ENCODE measurements at regions of chr5 and their contacts with region 1.

Region 1: GRCh38 chr5:1344975-1345838 is at the start of gene CLPTM1L:
- DNase-seq: peak; percentile 82 to 93 (median 90)
- ATAC-seq: peak; percentile 95
- H3K4me3 ChIP-seq: peak within 1 kb of the TSS; percentile 79
- H3K4me3 Mint-ChIP-seq: peak within 1 kb of the TSS; percentile 84 to 95 (median 91)
- H3K27ac ChIP-seq: peak within 1 kb of the TSS; percentile 97
- H3K27ac Mint-ChIP-seq: peak within 1 kb of the TSS; percentile 72 to 95 (median 88)
- H3K4me1 ChIP-seq: peaks cover 12 to 18% of the 10 kb centered on the region in 2 donors
- H3K4me1 Mint-ChIP-seq: peaks cover 21 to 44% (median 33%) of the 10 kb centered on the region in 7 donors
- H3K27me3 ChIP-seq: no peaks in the 10 kb centered on the region
- H3K27me3 Mint-ChIP-seq: no peaks in the 10 kb centered on the region
- total RNA-seq, gene CLPTM1L: 64.9 to 104 (median 71.9) TPM

Region 2: DNA sequence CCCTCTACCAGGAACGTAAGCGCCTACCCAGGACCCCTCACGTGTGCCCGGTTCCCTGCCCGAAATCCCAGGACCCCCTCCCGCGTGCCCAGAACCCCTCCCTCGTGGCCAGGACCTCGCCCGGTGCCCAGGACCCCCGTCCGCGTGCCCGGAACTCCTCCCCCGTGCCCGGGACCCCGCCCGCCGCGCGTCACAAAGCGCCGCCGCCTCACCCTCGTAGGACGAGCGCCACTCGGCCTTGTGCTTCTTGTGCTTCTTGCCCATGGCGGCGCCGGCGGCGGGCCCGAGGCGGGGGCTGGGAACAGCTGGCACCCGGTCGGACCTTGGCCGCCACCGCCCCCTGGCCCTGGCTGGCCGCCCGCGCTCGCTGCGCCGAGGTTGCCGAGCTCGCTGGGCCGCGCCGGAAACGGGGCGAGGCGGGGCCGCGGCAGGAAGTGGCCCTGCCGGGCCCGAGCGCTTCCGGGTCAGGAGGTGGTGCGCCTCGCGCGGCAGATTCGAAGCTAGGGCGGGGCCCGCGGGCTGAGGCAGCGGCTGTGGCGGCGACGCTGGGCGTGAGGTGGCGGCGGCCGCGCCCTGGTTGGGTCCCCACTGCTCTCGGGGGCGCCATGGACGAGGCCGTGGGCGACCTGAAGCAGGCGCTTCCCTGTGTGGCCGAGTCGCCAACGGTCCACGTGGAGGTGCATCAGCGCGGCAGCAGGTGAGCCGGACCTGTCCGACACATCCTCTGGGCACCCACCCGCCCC is 452.6 kb before region 1 on chr5 and contains the starts of genes BRD9 and TRIP13:
- CTCF ChIA-PET with region 1: no interaction called
- POLR2A ChIA-PET with region 1: no interaction called
- intact Hi-C with region 1: loop called in 1 of 2 experiments (anchors 2 kb)
- DNase-seq: peak; percentile 77 to 90 (median 86)
- ATAC-seq: peak; percentile 98
- H3K4me3 ChIP-seq: peak within 1 kb of the TSS; percentile 84
- H3K4me3 Mint-ChIP-seq: peak within 1 kb of the TSS; percentile 79 to 93 (median 86)
- H3K27ac ChIP-seq: peak within 1 kb of the TSS; percentile 91
- H3K27ac Mint-ChIP-seq: peak within 1 kb of the TSS; percentile 69 to 92 (median 89)
- H3K4me1 ChIP-seq: peaks cover 10 to 14% of the 10 kb centered on the region in 2 donors
- H3K4me1 Mint-ChIP-seq: peaks cover 12 to 35% (median 28%) of the 10 kb centered on the region in 7 donors
- H3K27me3 ChIP-seq: no peaks in the 10 kb centered on the region
- H3K27me3 Mint-ChIP-seq: no peaks in the 10 kb centered on the region
- total RNA-seq, gene BRD9: 63.2 to 93.2 (median 82.2) TPM
- total RNA-seq, gene TRIP13: 0.39 to 23.5 (median 0.57) TPM in 4 of 5 experiments, not detected in the other

Region 3: GRCh38 chr5:1167728-1168709 is 177.2 kb before region 1 on chr5:
- CTCF ChIA-PET with region 1: interaction called, 4 read pairs
- POLR2A ChIA-PET with region 1: no interaction called
- intact Hi-C with region 1: loop called in 1 of 2 experiments (anchors 1 kb)
- DNase-seq: peak; percentile 51 to 79 (median 71)
- ATAC-seq: peak; percentile 81
- H3K4me3 ChIP-seq: no peak overlapping the region
- H3K4me3 Mint-ChIP-seq: peak overlapping the region; percentile 58 to 85 (median 79)
- H3K27ac ChIP-seq: no peak overlapping the region
- H3K27ac Mint-ChIP-seq: no peak overlapping the region
- H3K4me1 ChIP-seq: no peaks in the 10 kb centered on the region
- H3K4me1 Mint-ChIP-seq: peaks cover 6 to 18% (median 12%) of the 10 kb centered on the region in 7 donors
- H3K27me3 ChIP-seq: no peaks in the 10 kb centered on the region
- H3K27me3 Mint-ChIP-seq: peaks cover 2 to 22% (median 11%) of the 10 kb centered on the region in 5 donors

Region 4: DNA sequence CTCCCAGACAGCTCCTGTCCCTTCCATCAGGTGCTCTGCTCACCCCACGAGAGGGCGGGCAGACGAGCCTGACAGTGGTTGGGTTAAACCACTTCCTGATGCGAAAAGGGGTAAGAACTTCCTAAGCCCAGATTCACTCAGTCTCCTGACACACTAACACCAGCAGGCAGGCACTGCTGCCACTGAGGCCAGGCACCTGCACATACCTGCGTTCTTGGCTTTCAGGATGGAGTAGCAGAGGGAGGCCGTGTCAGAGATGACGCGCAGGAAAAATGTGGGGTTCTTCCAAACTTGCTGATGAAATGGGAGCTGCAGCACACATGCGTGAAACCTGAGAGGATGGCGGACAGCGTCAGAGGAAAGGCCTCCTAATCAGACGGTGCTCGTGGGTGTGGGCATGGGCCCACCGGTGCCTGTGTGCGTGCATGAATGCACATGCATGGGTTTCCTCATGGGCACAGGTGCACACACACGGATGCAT is 90.1 kb before region 1 on chr5:
- CTCF ChIA-PET with region 1: no interaction called
- POLR2A ChIA-PET with region 1: interaction called, 7 read pairs
- intact Hi-C with region 1: loop called in 1 of 2 experiments (anchors 1 kb)
- DNase-seq: peak; percentile 31 to 79 (median 71)
- ATAC-seq: peak; percentile 83
- H3K4me3 ChIP-seq: peak overlapping the region; percentile 48
- H3K4me3 Mint-ChIP-seq: peak overlapping the region; percentile 76 to 97 (median 90)
- H3K27ac ChIP-seq: peak overlapping the region; percentile 57
- H3K27ac Mint-ChIP-seq: peak overlapping the region; percentile 30 to 93 (median 89)
- H3K4me1 ChIP-seq: peaks cover 9 to 18% of the 10 kb centered on the region in 2 donors
- H3K4me1 Mint-ChIP-seq: peaks cover 7 to 23% (median 20%) of the 10 kb centered on the region in 7 donors
- H3K27me3 ChIP-seq: no peaks in the 10 kb centered on the region
- H3K27me3 Mint-ChIP-seq: no peaks in the 10 kb centered on the region

Region 5: DNA sequence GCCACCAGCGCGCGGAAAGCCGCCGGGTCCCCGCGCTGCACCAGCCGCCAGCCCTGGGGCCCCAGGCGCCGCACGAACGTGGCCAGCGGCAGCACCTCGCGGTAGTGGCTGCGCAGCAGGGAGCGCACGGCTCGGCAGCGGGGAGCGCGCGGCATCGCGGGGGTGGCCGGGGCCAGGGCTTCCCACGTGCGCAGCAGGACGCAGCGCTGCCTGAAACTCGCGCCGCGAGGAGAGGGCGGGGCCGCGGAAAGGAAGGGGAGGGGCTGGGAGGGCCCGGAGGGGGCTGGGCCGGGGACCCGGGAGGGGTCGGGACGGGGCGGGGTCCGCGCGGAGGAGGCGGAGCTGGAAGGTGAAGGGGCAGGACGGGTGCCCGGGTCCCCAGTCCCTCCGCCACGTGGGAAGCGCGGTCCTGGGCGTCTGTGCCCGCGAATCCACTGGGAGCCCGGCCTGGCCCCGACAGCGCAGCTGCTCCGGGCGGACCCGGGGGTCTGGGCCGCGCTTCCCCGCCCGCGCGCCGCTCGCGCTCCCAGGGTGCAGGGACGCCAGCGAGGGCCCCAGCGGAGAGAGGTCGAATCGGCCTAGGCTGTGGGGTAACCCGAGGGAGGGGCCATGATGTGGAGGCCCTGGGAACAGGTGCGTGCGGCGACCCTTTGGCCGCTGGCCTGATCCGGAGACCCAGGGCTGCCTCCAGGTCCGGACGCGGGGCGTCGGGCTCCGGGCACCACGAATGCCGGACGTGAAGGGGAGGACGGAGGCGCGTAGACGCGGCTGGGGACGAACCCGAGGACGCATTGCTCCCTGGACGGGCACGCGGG is 50.2 kb before region 1 on chr5 and contains the start of gene TERT:
- CTCF ChIA-PET with region 1: no interaction called
- POLR2A ChIA-PET with region 1: interaction called, 4 read pairs
- intact Hi-C with region 1: loop called (anchors 1 to 2 kb)
- DNase-seq: peak; percentile 50 to 81 (median 74)
- ATAC-seq: peak; percentile 91
- H3K4me3 ChIP-seq: no peak within 1 kb of the TSS
- H3K4me3 Mint-ChIP-seq: peak within 1 kb of the TSS in 9 of 10 donors; percentile 45 to 66 (median 59)
- H3K27ac ChIP-seq: no peak within 1 kb of the TSS
- H3K27ac Mint-ChIP-seq: no peak within 1 kb of the TSS
- H3K4me1 ChIP-seq: peaks cover 0 to 11% of the 10 kb centered on the region in 2 donors
- H3K4me1 Mint-ChIP-seq: peaks cover 0 to 15% (median 4%) of the 10 kb centered on the region in 7 donors
- H3K27me3 ChIP-seq: no peaks in the 10 kb centered on the region
- H3K27me3 Mint-ChIP-seq: peaks cover 0 to 6% (median 0%) of the 10 kb centered on the region in 5 donors
- total RNA-seq, gene TERT: 0.13 to 3.3 (median 1.8) TPM

Region 6: DNA sequence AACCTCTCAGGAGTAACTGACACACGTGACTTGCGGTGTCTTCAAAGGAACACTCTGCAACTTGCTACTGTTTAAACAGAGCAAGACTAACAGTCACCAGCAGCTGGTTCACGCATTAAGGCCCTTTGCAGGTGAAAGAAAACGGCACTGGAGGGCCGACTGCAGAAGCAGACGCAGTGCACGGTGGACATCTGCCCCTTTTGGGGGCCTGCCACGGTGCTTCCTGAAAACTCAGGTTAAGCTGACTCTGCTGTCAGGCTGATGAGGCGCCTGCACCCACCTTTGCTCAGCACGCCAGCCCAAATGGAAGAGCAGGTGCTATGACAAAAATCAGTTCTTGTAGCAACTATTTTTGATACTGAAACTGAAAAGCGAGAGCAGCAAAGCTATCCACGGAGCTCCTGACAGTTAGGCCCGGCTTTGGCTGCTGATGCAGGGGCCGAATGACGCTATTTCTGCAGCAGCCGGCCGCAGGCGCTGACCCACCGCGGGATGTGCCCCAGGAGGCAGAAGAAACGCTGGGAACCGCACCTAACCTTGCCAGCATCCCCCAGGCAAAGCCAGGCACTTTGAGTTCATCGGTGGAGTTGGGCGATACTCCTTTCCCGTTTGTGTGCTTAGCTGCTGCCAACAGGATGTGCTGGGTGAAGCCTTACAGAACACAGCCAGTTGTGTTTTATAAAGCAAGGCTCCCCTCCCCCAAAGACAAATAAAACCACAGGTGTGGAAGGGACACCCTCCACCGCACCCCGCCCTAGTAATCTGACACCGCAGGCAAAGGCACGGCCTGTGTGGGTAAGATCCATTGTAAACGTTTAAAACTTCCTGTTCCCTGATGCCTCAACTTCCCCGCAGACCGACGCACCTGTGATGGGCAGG is 29.3 kb before region 1 on chr5:
- CTCF ChIA-PET with region 1: interaction called, 3 read pairs
- POLR2A ChIA-PET with region 1: interaction called, 14 read pairs
- intact Hi-C with region 1: loop called (anchors 1 kb)
- DNase-seq: peak in 8 of 9 donors; percentile 47 to 88 (median 82)
- ATAC-seq: peak; percentile 79
- H3K4me3 ChIP-seq: peak overlapping the region; percentile 51
- H3K4me3 Mint-ChIP-seq: peak overlapping the region; percentile 81 to 92 (median 86)
- H3K27ac ChIP-seq: peak overlapping the region; percentile 66
- H3K27ac Mint-ChIP-seq: peak overlapping the region; percentile 94 to 96 (median 95)
- H3K4me1 ChIP-seq: peaks cover 39 to 55% of the 10 kb centered on the region in 2 donors
- H3K4me1 Mint-ChIP-seq: peaks cover 36 to 70% (median 59%) of the 10 kb centered on the region in 7 donors
- H3K27me3 ChIP-seq: no peaks in the 10 kb centered on the region
- H3K27me3 Mint-ChIP-seq: peaks cover 0 to 2% (median 0%) of the 10 kb centered on the region in 5 donors

Region 7: DNA sequence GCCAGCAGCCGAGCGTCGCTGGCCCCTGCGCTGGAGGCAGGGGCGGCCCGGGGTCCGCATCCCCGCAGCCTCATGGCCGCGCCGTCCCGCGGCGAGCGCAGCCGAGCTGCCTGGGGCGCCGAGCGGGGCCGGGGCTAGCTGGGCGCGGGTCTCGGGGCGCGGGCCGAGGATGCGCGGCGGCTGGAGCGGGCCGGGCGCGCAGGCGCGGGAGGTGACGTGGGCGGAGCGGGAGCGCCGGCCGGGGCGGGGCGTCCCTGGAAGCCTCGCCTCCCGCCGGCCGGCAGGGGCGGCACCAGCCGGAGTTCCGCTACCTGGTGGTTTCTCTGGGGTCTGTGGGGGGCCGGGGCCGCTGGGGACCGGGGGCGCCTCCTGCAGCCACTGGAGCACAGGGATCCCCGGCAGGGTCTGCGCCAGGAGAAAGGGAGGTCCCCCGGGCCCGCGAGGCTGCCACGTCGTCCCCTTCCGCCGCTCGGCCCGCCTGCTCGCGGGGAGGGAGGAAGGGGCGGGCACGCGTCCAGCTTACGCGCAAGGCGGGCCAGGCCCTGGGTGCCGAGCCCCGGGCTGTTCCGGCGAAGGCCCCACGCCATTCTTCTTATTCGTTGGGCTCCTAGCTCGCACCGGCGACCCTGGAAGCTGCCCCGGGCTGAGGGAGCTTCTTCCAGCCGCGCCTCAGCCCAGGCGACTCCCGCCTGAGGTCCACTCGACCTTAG is 178.7 kb after region 1 on chr5 and contains the start of gene LPCAT1:
- CTCF ChIA-PET with region 1: no interaction called
- POLR2A ChIA-PET with region 1: no interaction called
- intact Hi-C with region 1: loop called in 1 of 2 experiments (anchors 10 kb)
- DNase-seq: peak; percentile 44 to 91 (median 71)
- ATAC-seq: peak; percentile 93
- H3K4me3 ChIP-seq: peak within 1 kb of the TSS; percentile 61
- H3K4me3 Mint-ChIP-seq: peak within 1 kb of the TSS; percentile 73 to 89 (median 83)
- H3K27ac ChIP-seq: peak within 1 kb of the TSS; percentile 81
- H3K27ac Mint-ChIP-seq: peak within 1 kb of the TSS in 6 of 9 donors; percentile 33 to 77 (median 69)
- H3K4me1 ChIP-seq: peaks cover 13 to 31% of the 10 kb centered on the region in 2 donors
- H3K4me1 Mint-ChIP-seq: peaks cover 13 to 30% (median 19%) of the 10 kb centered on the region in 7 donors
- H3K27me3 ChIP-seq: no peaks in the 10 kb centered on the region
- H3K27me3 Mint-ChIP-seq: peaks cover 0 to 8% (median 0%) of the 10 kb centered on the region in 5 donors
- total RNA-seq, gene LPCAT1: 29.4 to 89.4 (median 49.7) TPM